Posterior cingulate gyrus (tissue), 11 donors: ENCODE measurements at regions of chr2 and their contacts with region 1.

Region 1: GRCh38 chr2:65300761-65301711 is 73.4 kb downstream of the ACTR2 start:
- DNase-seq: peak; percentile 38 to 95 (median 74)

Region 2: DNA sequence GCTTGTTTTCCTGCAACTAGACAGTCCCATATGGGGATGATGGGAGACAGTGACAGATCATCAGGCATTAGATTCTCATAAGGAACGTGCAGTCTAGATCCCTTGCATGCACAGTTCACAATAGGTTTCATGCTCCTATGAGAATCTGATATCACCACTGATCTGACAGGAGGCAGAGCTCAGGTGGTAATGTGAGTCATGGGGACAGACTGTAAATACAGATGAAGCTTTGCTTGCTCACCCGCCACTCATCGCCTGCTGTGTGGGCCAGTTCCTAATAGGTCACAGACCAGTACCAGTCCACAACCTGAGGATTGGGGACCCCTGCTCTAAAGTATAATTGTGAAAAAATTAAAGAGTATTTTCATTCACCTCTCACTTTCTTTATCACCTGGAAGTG is 147.5 kb before region 1 on chr2:
- intact Hi-C with region 1: no loop called
- DNase-seq: no peak

Region 3: DNA sequence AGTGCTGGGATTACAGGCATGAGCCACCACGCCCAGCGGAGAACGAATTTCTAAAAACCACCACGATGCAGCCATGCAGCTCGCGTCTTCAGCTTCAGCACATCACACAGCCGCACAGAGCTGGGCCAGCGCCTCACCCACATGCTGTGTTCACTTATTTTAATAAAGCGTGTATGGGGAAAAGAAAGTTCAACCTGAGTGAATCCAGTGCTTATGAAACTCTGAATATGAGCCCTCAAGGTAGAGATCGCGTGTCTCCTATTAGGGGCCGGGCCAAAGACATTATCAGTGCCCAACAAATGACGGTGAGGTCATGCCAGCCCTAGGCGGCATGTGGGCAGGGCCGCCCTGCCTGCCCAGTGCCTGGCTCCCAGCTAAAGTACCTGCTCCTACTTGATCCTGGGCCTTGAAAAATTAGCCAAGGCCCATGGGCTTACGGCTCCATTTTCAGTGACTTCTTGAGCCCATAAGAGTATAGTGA is 87.1 kb after region 1 on chr2:
- intact Hi-C with region 1: loop called (anchors 5 kb)
- DNase-seq: peak in 1 of 10 donors; percentile 81

Region 4: DNA sequence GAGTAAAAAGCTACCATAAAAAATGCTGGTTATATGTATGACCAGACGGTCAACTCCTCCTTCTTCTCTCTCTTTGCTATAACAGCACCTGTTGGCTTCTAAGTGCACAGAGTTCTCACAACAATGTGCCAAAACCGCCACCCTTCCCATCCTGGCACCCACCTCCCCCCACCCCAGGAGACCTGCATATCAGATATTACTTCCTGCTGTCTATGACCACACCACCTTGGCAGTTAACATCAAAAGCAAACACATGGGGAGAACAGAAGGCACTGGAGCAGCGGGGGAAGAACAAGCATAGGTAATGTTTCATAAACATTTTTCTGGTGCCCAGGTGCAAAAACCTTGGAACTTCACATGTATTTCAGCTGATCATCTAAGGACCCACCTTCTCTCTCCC is 115.9 kb after region 1 on chr2:
- intact Hi-C with region 1: no loop called
- DNase-seq: no peak

Region 5: GRCh38 chr2:65437392-65438135 is 136.5 kb after region 1 on chr2:
- intact Hi-C with region 1: loop called (anchors 2 kb)
- DNase-seq: peak in 1 of 10 donors; percentile 63